ENCODE measurements at regions of chr13 and their contacts with region 1.

Region 1: DNA sequence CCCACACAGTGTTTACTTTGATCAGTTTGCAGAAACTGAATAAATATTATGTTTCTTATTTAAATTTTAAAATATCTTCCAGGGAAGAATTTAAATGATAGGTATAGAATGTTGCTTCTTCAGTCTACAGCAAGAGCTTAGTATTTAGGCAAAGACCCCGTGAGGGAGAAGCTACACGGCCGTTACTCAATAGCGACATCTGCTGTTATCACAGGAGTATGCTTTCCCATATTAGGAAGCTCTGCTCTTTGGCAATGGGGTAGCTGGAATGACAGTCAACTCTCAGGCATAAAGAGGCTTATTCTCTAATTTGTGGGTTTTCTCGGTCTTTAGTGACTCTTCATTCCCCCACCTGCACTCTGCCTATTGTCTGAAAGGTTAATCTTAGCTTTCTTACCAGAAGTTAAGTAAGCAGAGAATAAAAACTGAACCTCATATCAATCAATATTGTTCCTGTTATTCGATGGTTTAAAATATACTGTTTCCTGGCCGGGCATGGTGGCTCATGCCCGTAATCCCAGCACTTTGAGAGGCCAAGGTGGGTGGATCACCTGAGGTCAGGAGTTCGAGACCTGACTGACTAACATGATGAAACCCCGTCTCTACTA is 13.2 kb upstream of the LHFPL6 start:
- DNase-seq: peak in 6 of 10 donors; percentile 7 to 87 (median 42)

Region 2: GRCh38 chr13:39037880-39038568 is 578.2 kb before region 1 on chr13 and contains the starts of genes NHLRC3 and PROSER1:
- intact Hi-C with region 1: loop called (anchors 5 kb)
- DNase-seq: peak; percentile 94 to 99 (median 96)

Region 3: GRCh38 chr13:39144941-39145533 is 471.2 kb before region 1 on chr13:
- intact Hi-C with region 1: loop called (anchors 2 kb)
- DNase-seq: peak in 9 of 10 donors; percentile 19 to 88 (median 61)

Region 4: GRCh38 chr13:39263033-39263432 is 353.2 kb before region 1 on chr13:
- intact Hi-C with region 1: loop called (anchors 5 kb)
- DNase-seq: peak in 4 of 10 donors; percentile 33 to 54 (median 45)

Region 5: DNA sequence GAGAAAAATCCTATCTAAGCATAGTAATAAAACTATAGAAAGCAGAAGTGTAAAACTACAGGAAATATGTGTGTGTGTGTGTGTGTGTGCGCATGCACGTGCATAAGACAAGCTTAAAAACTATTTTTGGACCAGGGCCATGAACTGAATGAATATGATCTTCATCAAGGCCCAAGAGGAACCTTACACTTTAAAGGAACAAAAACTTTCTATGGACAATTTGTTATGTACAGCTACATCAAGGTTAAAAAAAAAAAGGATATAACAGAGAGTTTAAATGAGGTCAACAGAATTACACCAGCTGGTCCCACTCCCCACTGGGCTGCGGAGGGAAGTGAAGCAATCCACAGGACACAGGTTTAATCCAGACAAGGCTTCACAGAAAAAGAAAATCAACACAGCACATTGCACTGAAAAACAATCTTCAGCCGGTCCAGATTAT is 164.3 kb before region 1 on chr13:
- intact Hi-C with region 1: no loop called
- DNase-seq: no peak

Measured in posterior cingulate gyrus (tissue), 11 donors.